ENCODE measurements at regions of chr18 and their contacts with region 1.

Region 1: GRCh38 chr18:62186774-62187542 is at the starts of genes PIGN and RELCH:
- DNase-seq: peak; percentile 96 to 97
- ATAC-seq: peak; percentile 99
- H3K4me3 ChIP-seq: peak within 1 kb of the TSS; percentile 62 to 85
- H3K27ac ChIP-seq: peak within 1 kb of the TSS in 1 of 2 donors; percentile 72
- H3K4me1 ChIP-seq: no peaks in the 10 kb centered on the region
- H3K27me3 ChIP-seq: no peaks in the 10 kb centered on the region
- total RNA-seq, gene PIGN: 25.0 to 32.2 TPM
- total RNA-seq, gene RELCH: 31.6 to 40.7 TPM

Region 2: DNA sequence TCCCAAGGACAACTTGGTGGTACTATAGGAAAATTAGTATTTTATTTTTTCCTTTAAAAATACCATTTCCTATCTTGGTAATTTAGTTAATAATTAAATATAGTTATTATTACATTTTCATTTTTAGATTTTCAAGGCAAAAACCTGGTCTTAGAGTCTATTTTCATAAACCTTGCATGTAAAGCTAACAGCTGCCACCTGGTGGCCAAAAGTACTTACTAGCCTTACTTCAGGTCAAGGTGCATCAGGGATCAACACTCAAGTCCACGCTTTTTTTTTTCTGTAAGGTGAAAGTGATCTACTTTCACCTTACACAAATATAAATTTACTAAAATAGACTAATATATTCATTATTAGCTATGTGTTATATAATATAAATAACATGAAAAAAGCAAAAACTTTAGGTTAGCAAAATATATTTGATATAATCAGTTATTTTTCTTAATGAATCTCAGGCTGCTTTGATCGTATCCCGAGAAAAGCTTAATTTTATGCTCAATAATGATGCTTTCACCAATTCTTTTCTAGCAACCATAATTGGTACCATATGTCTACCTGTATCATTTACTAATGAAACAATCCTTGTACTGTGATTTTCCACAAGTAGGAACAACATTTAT is 62.6 kb after region 1 on chr18:
- intact Hi-C with region 1: loop called (anchors 2 kb)
- DNase-seq: peak; percentile 74 to 75
- ATAC-seq: no peak
- H3K4me3 ChIP-seq: no peak overlapping the region
- H3K27ac ChIP-seq: no peak overlapping the region
- H3K4me1 ChIP-seq: no peaks in the 10 kb centered on the region
- H3K27me3 ChIP-seq: no peaks in the 10 kb centered on the region

Region 3: DNA sequence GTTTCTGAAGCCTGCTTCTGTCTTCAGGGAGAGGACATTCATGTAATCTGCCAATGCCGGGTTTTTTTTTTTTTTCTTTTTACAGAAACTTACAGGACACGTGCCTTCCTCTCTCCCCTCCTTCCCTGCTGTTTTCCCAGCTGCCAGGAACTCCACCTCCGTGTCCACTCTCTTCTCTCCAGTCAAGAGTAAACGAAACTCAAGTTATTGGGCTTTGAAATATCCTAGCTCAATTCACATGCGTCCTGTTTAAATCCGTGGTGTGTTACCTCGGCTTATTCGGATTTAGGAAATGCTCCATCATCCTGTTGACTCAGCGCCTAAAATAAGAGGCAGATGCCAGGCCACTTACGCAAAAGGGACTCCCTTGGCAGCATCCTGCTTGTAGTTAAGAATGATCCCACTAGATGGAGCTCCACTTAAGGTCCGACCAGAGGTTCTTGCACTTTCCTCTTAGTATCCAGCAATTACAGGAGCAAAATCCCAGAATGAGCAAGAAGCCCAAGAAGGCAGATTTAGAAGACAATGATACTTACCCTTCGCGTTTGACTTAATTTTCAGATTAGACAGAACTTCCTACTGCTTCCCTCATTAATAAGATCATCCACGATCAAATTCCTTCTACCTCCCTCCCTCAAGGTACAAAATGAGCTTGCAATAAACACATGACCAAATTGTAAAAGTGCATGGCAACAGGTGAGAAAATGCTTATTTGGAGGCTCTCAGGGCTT is 238.7 kb after region 1 on chr18:
- intact Hi-C with region 1: loop called in 1 of 2 experiments (anchors 5 kb)
- DNase-seq: peak in 1 of 2 donors; percentile 75
- ATAC-seq: peak; percentile 97
- H3K4me3 ChIP-seq: peak overlapping the region; percentile 25 to 36
- H3K27ac ChIP-seq: peak overlapping the region in 1 of 2 donors; percentile 83
- H3K4me1 ChIP-seq: peaks cover 0 to under 1% of the 10 kb centered on the region in 2 donors
- H3K27me3 ChIP-seq: no peaks in the 10 kb centered on the region

Region 4: DNA sequence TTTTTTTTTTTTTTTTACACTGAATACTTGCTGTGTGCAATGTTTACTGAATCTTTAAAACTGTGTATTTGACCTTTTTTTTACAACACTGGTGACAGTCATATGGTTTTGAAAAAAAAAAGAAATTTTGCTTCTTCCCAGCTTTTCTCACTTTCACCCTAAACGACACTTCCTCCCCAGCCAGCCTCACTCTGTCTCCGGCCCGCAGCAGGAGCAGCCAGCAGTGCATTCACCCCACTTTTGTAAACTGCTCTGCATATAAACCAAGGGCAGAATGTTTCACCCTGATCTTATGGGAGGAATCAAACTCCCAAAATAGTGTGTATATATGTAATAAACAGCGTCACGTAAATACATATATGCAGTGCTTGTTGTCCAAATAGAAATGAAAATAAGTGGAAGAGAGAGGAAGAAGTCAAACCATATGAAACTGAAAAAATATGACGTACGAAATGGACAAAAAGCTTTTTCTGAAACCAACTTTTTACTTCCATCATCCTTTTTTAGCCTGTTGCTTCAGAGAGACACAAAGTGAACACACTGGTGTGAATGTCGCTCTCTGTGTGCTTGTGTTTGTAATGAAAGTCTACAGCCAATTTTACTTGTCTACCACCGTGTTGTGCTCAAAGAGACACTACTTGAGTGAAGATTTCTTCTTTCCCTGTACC is 390.0 kb after region 1 on chr18:
- intact Hi-C with region 1: loop called (anchors 5 to 10 kb)
- DNase-seq: no peak
- ATAC-seq: no peak
- H3K4me3 ChIP-seq: no peak overlapping the region
- H3K27ac ChIP-seq: no peak overlapping the region
- H3K4me1 ChIP-seq: no peaks in the 10 kb centered on the region
- H3K27me3 ChIP-seq: no peaks in the 10 kb centered on the region

Region 5: GRCh38 chr18:62784966-62785413 is 598.0 kb after region 1 on chr18:
- intact Hi-C with region 1: no loop called
- DNase-seq: no peak
- ATAC-seq: peak; percentile 11
- H3K4me3 ChIP-seq: no peak overlapping the region
- H3K27ac ChIP-seq: no peak overlapping the region
- H3K4me1 ChIP-seq: peaks cover 0 to 2% of the 10 kb centered on the region in 2 donors
- H3K27me3 ChIP-seq: no peaks in the 10 kb centered on the region

Measured in aorta (tissue), 5 donors.